ENCODE measurements at regions of chr19 and their contacts with region 1.

Region 1: DNA sequence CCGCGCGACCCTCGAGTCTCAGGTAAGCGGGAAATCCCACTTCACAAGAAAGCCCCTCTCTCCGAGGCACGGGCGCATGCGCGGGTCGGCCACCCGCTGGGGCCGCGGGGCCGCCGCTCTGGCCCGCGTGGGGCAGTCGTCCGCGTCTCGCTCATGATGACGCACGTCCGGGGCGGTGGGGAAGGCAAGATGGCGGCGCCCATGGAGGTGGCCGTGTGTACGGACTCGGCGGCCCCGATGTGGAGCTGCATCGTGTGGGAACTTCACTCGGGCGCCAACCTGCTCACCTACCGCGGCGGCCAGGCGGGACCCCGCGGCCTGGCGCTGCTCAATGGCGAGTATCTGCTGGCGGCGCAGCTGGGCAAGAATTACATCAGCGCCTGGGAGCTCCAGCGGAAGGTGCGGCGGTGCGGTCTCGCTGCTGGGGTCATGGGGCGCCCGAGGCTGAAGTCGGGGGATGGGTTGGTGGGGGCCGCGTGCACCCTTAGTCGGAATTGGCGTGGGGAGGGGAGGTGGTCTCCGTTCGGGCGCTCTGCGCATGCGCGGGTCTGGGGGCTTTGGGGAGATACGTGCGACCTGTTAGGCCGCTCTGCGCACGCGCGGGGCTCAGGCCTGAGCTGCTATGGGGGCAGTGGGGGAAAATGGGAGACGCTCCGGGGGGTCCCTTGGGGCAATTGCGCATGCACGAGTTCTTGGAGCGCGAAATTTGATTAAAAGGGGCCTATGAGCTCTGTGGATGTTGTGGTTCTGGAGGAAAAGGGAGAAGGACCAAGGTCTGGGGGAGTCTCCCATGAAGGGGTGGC is at the start of gene WDR18:
- DNase-seq: peak; percentile 97
- H3K4me3 ChIP-seq: peak within 1 kb of the TSS; percentile 76 to 92 (median 84)
- H3K27ac ChIP-seq: peak within 1 kb of the TSS; percentile 81 to 88 (median 86)
- H3K4me1 ChIP-seq: peaks cover 0 to 29% (median 26%) of the 10 kb centered on the region in 4 donors
- H3K27me3 ChIP-seq: no peaks in the 10 kb centered on the region
- CTCF ChIP-seq: peak in 1 of 4 experiments; percentile 28
- EP300 ChIP-seq: no peak
- POLR2A ChIP-seq: peak; percentile 8 to 49
- total RNA-seq, gene WDR18: 14.3 to 33.1 (median 30.4) TPM

Region 2: GRCh38 chr19:860481-861101 is 123.8 kb before region 1 on chr19:
- intact Hi-C with region 1: loop called (anchors 2 kb)
- DNase-seq: peak; percentile 89
- H3K4me3 ChIP-seq: peak overlapping the region; percentile 16 to 45 (median 34)
- H3K27ac ChIP-seq: peak overlapping the region in 2 of 4 donors; percentile 61 to 78
- H3K4me1 ChIP-seq: peaks cover 0 to 41% (median 30%) of the 10 kb centered on the region in 4 donors
- H3K27me3 ChIP-seq: peaks cover 21 to 64% (median 42%) of the 10 kb centered on the region in 3 donors
- CTCF ChIP-seq: no peak
- EP300 ChIP-seq: no peak
- POLR2A ChIP-seq: no peak

Region 3: DNA sequence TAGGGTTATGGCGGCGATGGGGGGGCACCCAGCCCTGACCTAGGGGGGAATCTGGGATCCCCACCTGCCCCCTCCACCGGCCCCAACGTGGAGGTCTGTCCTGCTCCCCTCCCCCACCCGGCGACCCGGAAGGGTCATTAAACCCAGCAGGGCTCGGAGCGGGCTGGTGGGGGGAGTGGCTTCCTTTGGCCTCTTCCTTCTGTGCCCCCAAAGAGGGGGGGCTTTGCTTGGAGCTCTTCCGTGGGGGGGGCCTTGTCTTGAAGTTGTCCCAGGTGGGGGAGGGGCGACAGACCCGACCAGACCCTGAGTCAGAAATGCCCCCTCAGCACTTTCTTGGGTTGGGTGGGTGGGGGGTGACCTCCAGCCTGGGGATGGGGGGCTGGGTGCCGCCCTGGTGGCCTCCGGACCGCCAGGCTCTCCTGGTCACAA is 57.0 kb before region 1 on chr19:
- intact Hi-C with region 1: no loop called
- DNase-seq: no peak
- H3K4me3 ChIP-seq: peak overlapping the region; percentile 85 to 98 (median 91)
- H3K27ac ChIP-seq: peak overlapping the region; percentile 83 to 93 (median 86)
- H3K4me1 ChIP-seq: peaks cover 0 to 41% (median 26%) of the 10 kb centered on the region in 4 donors
- H3K27me3 ChIP-seq: no peaks in the 10 kb centered on the region
- CTCF ChIP-seq: no peak
- EP300 ChIP-seq: no peak
- POLR2A ChIP-seq: no peak

Region 4: DNA sequence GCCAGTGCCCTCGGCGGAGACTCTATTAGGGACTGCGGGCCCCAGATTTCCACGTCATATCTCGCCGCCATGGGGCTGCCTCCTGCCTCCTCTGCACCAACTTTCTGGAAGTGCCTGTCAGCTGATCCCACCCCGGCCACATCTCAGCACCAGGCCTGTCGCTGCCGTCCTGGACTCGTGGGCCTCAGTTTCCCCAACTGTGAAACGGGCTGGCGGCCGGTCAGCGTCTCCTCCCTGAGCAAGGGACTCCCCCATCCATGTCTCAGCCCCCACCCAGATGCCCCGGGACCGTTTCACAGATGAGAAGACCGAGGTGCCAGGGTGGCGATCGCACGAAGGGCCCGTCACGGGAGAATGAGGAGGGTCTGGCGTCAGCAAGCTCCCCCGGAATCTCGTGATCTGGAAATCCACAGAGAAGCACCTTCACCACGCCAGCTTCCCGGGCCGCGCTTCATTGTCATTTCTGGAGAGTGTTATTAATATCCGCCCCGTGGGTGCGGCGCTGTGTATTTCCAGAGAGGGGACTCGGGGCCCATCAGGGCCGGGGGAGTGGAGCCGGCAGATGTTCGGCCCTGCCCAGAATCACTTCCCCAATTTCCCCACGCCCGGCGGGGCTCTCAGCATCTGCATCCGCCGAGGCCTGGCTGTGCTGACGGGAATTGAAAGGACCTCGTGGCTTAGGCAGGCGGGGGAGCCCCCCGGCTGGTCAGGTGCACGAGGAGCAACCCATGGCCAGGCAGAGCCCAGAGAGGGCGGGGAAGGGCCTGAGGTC is 36.9 kb before region 1 on chr19:
- intact Hi-C with region 1: no loop called
- DNase-seq: peak; percentile 87
- H3K4me3 ChIP-seq: no peak overlapping the region
- H3K27ac ChIP-seq: no peak overlapping the region
- H3K4me1 ChIP-seq: peaks cover 0 to 20% (median under 1%) of the 10 kb centered on the region in 4 donors
- H3K27me3 ChIP-seq: no peaks in the 10 kb centered on the region
- CTCF ChIP-seq: no peak
- EP300 ChIP-seq: peak in 1 of 4 donors; percentile 21
- POLR2A ChIP-seq: no peak

Region 5: GRCh38 chr19:1020868-1021425 is 36.6 kb after region 1 on chr19 and contains the start of gene TMEM259:
- intact Hi-C with region 1: no loop called
- DNase-seq: peak; percentile 99
- H3K4me3 ChIP-seq: peak within 1 kb of the TSS; percentile 66 to 97 (median 84)
- H3K27ac ChIP-seq: peak within 1 kb of the TSS; percentile 92 to 96 (median 94)
- H3K4me1 ChIP-seq: peaks cover 0 to 69% (median 58%) of the 10 kb centered on the region in 4 donors
- H3K27me3 ChIP-seq: no peaks in the 10 kb centered on the region
- CTCF ChIP-seq: no peak
- EP300 ChIP-seq: peak in 1 of 4 donors; percentile 71
- POLR2A ChIP-seq: no peak
- total RNA-seq, gene TMEM259: 85.6 to 174 (median 126) TPM

Region 6: DNA sequence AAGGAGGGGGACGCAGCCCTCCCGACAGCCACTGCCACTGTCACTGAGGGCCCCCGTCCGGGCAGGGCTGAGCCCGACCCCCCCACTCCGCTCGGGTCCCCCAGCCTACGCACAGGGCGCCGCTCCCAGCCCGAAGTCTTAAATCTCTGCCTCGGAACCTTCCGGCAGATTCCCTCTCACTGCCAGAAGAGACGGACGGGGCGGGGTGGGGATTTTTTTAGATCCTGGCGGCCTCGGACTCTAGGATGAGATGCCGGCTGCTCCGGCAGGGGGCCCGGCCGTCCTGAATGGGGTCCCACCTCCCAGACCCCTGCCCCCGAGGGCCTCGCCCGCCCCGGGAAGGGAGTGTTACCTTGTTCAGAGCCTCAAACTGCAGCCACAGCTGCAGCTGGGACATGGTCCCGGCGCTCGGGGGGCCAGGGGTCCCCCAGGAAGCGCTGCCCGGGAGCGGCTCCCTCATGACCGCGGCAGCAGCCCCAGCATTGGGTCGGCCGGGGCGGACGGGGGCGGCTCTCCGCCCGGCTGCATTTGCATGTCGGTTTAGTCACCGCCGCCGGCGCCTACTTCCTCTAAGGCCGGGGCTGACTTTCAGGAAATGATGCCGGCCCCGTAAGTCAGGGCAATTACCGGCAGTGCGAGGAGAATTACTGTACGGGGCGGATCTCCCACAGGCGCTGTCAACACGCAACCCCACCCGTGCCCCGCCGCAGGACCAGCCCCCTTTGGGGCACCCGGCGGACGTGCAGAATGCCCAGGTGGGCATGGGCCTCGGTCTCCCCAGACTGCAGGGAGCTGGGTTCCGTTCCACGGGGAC is 147.6 kb after region 1 on chr19:
- intact Hi-C with region 1: no loop called
- DNase-seq: peak; percentile 91
- H3K4me3 ChIP-seq: peak overlapping the region; percentile 53 to 68 (median 60)
- H3K27ac ChIP-seq: peak overlapping the region; percentile 83 to 94 (median 90)
- H3K4me1 ChIP-seq: peaks cover 0 to 75% (median 59%) of the 10 kb centered on the region in 4 donors
- H3K27me3 ChIP-seq: no peaks in the 10 kb centered on the region
- CTCF ChIP-seq: peak in 1 of 4 experiments; percentile 44
- EP300 ChIP-seq: peak; percentile 16 to 91 (median 60)
- POLR2A ChIP-seq: no peak